ENCODE measurements at regions of chr5 and their contacts with region 1.

Region 1: GRCh38 chr5:138575194-138576015 is at the start of gene HSPA9:
- DNase-seq: peak; percentile 94 to 98
- H3K4me3 ChIP-seq: peak within 1 kb of the TSS; percentile 99
- H3K27ac ChIP-seq: peak within 1 kb of the TSS; percentile 99
- H3K4me1 ChIP-seq: peaks cover 27% of the 10 kb centered on the region
- H3K27me3 ChIP-seq: no peaks in the 10 kb centered on the region
- CTCF ChIP-seq: no peak; the same call in 1 of the 2 replicates
- total RNA-seq, gene HSPA9: 252 and 256 TPM in 2 replicates

Region 2: GRCh38 chr5:138287246-138287645 is 288.2 kb before region 1 on chr5:
- CTCF ChIA-PET with region 1: no interaction called
- POLR2A ChIA-PET with region 1: no interaction called
- intact Hi-C with region 1: no loop called
- DNase-seq: no peak
- H3K4me3 ChIP-seq: no peak overlapping the region
- H3K27ac ChIP-seq: no peak overlapping the region
- H3K4me1 ChIP-seq: no peaks in the 10 kb centered on the region
- H3K27me3 ChIP-seq: no peaks in the 10 kb centered on the region
- CTCF ChIP-seq: no peak

Region 3: DNA sequence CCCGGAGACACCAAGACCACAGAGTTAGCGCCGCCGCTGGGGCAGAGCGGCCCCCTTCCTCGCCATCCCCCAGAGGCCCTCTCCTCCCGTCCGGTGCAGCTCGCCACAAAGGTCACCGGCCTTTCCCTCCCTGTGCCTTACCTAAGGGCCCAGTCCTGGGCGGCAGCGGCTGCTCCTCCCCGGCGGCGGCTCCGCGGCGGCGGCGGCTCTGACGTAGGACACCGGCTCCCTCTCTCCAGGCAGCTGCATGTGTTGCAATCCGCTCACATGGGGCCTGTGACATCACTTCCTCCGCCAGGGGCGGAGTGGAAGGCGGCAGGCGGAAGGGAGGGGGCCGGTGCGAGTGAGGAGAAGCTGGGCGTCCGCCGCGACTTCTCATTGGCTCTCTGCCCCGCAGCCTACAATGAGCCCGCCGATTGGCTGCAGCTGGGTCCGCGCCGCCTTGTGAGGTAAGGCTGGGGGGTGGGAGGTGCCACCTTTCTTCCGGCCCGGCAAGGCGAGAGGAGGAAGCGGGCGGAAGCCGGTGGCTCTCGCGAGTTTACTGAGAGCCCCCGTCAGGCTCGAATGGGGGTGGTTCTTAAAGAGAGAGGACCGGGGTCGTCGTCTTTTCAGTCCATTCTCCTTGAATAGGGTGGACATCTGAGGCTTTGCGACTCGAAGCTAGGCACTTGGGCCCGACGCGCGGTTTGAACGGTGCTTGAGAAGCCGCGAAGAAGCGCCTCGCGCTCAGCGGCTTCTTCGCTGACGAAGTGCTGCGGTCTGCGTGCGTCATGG is 32.3 kb before region 1 on chr5 and contains the start of gene ETF1:
- CTCF ChIA-PET with region 1: no interaction called
- POLR2A ChIA-PET with region 1: interaction called, 8 read pairs
- intact Hi-C with region 1: loop called (anchors 1 kb)
- DNase-seq: peak; percentile 96 to 99
- H3K4me3 ChIP-seq: peak within 1 kb of the TSS; percentile 66
- H3K27ac ChIP-seq: peak within 1 kb of the TSS; percentile 77
- H3K4me1 ChIP-seq: peaks cover 45% of the 10 kb centered on the region
- H3K27me3 ChIP-seq: no peaks in the 10 kb centered on the region
- CTCF ChIP-seq: no peak
- total RNA-seq, gene ETF1: 61.8 and 84.9 TPM in 2 replicates

Region 4: GRCh38 chr5:138711630-138712210 is 136.3 kb after region 1 on chr5:
- CTCF ChIA-PET with region 1: no interaction called
- POLR2A ChIA-PET with region 1: no interaction called
- intact Hi-C with region 1: no loop called
- DNase-seq: no peak
- H3K4me3 ChIP-seq: no peak overlapping the region
- H3K27ac ChIP-seq: no peak overlapping the region
- H3K4me1 ChIP-seq: peaks cover 18% of the 10 kb centered on the region
- H3K27me3 ChIP-seq: no peaks in the 10 kb centered on the region
- CTCF ChIP-seq: no peak

Region 5: GRCh38 chr5:138725138-138725833 is 149.9 kb after region 1 on chr5:
- CTCF ChIA-PET with region 1: no interaction called
- POLR2A ChIA-PET with region 1: interaction called, 8 read pairs
- intact Hi-C with region 1: loop called (anchors 2 kb)
- DNase-seq: peak; percentile 94 to 99
- H3K4me3 ChIP-seq: peak overlapping the region; percentile 17; the same call in 1 of the 2 replicates
- H3K27ac ChIP-seq: peak overlapping the region; percentile 74
- H3K4me1 ChIP-seq: peaks cover 55% of the 10 kb centered on the region
- H3K27me3 ChIP-seq: no peaks in the 10 kb centered on the region
- CTCF ChIP-seq: peak; percentile 70

Region 6: DNA sequence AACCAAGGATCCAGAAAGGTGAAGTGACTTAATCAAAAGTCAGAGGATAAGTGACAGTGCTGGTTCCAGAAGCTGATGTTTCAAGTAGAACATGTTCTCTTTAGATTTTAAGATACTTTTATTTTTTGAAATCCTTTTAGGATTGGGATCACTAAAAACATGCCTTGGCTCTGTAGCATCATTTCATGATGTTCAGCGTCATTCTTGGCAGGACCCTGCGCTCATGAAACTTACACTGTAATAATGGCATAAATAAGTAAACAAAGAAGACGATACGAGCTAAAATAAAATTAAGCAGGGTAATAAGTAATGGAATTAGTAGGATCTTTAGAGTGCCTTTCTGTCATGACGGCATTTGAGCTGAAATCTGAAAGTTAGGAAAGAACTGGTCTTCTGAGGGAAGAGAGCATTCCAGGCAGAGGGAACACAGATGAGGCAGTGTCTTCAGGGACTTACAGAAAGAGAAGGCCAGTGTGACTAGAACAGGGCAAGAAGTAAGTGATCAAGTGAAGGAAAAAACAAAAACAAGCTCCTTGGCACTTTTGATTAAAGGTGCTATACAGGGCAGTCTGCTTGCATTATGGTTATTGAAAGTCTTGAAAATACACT is 197.7 kb after region 1 on chr5:
- CTCF ChIA-PET with region 1: no interaction called
- POLR2A ChIA-PET with region 1: no interaction called
- intact Hi-C with region 1: loop called (anchors 5 kb)
- DNase-seq: no peak
- H3K4me3 ChIP-seq: no peak overlapping the region
- H3K27ac ChIP-seq: no peak overlapping the region; the same call in 1 of the 2 replicates
- H3K4me1 ChIP-seq: no peaks in the 10 kb centered on the region
- H3K27me3 ChIP-seq: no peaks in the 10 kb centered on the region
- CTCF ChIP-seq: no peak

Region 7: DNA sequence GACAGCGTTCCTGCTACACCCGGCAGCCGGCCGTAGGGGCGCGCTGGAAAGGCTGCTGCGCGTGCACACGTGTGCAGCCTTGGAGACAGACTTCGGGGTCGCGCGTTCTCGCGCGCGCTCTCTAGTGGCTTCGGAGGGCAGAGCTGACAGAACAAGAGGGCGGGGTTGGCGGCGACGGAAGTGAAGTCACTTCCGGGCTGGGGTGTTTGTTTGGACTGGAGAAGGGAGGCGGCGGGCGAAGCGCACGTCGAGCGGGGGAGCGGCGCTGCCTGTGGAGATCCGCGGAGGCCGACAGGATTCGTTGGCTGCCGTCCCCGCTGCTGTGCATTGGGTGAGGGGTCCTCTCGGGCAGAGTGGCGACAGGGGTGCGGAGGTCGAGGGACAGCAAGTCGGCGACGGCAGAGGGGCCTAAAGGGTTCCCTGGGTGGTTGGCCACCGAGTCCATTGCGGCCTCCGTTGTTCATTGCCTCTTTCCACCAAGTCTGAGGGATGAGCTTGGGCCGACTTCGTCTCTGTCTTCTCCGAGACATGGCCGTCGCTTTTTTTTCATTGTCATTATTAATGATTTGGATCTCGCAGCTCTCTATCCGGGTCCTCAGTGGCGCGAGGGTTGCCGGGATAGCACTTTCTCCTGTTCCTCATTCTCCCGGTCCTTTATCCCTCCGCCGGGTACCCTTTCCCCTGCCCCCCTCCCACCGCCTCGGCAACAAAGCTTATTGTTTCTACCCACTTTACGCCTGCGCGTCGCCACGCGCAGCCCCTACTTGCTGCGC is 766.4 kb after region 1 on chr5 and contains the start of gene PAIP2:
- CTCF ChIA-PET with region 1: no interaction called
- POLR2A ChIA-PET with region 1: interaction called, 36 read pairs
- intact Hi-C with region 1: no loop called
- DNase-seq: peak; percentile 89 to 95
- H3K4me3 ChIP-seq: peak within 1 kb of the TSS; percentile 77
- H3K27ac ChIP-seq: peak within 1 kb of the TSS; percentile 68
- H3K4me1 ChIP-seq: peaks cover 23% of the 10 kb centered on the region
- H3K27me3 ChIP-seq: no peaks in the 10 kb centered on the region
- CTCF ChIP-seq: peak; percentile 66
- total RNA-seq, gene PAIP2: 79.4 and 90.5 TPM in 2 replicates